Activated CD4-positive, alpha-beta T cell treated with anti-CD3 and anti-CD28 coated beads for 36 hours (primary cell): ENCODE measurements at regions of chr16 and their contacts with region 1.

Region 1: DNA sequence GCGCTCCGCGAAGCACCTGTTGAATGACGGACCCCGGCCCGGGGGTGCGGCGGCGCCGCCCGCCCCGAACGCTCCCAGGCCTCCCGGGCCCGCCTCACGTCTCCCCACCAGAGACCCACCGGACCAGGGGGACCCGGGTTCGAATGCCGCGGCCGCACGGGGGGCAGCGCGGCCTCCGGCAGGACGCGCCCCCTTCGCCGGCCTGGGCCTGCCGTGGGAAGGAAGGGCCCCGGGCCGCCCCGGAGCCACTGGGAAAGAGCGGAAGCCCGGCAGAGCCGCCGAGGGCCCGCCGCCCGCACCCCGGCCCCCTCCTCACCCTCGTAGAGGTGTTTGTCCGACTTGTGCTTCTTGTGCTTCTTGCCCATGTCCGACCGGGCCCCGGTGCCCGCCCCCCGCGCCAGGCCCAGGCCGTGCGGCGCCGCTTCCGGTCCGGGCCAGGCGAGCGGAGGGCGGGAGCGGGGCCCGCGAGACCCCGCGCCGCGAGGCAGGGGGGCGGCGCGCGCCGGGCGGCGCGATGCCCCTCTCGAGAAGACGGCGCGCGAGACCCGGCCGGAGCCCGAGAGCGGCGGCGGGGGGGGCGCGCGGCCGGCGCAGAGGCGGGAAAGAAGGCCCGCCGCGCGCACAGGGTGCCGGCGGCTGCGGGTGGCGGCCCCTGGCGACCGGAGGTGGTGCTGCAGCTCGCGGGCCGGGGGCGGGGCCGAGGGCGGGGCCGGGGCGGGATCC is at the start of gene BRD7:
- DNase-seq: peak; percentile 82
- ATAC-seq: peak; percentile 73
- H3K4me3 Mint-ChIP-seq: peak within 1 kb of the TSS; percentile 89
- H3K27ac Mint-ChIP-seq: peak within 1 kb of the TSS; percentile 86
- H3K4me1 Mint-ChIP-seq: peaks cover 41% of the 10 kb centered on the region
- H3K27me3 Mint-ChIP-seq: no peaks in the 10 kb centered on the region
- total RNA-seq, gene BRD7: 87.7 to 104 TPM

Region 2: GRCh38 chr16:50266337-50267091 is 102.1 kb before region 1 on chr16 and contains the start of gene ADCY7:
- CTCF ChIA-PET with region 1: interaction called, 3 read pairs
- POLR2A ChIA-PET with region 1: no interaction called
- intact Hi-C with region 1: loop called in 1 of 2 experiments (anchors 5 kb)
- DNase-seq: peak; percentile 92
- ATAC-seq: peak; percentile 83
- H3K4me3 Mint-ChIP-seq: peak within 1 kb of the TSS; percentile 87
- H3K27ac Mint-ChIP-seq: peak within 1 kb of the TSS; percentile 98
- H3K4me1 Mint-ChIP-seq: peaks cover 70% of the 10 kb centered on the region
- H3K27me3 Mint-ChIP-seq: no peaks in the 10 kb centered on the region
- total RNA-seq, gene ADCY7: 51.8 to 85.3 TPM

Region 3: GRCh38 chr16:50335196-50335958 is 33.2 kb before region 1 on chr16:
- CTCF ChIA-PET with region 1: interaction called, 4 read pairs
- POLR2A ChIA-PET with region 1: interaction called, 5 read pairs
- intact Hi-C with region 1: loop called in 1 of 2 experiments (anchors 2 kb)
- DNase-seq: peak; percentile 74
- ATAC-seq: peak; percentile 65
- H3K4me3 Mint-ChIP-seq: peak overlapping the region; percentile 41
- H3K27ac Mint-ChIP-seq: peak overlapping the region; percentile 94
- H3K4me1 Mint-ChIP-seq: peaks cover 73% of the 10 kb centered on the region
- H3K27me3 Mint-ChIP-seq: no peaks in the 10 kb centered on the region

Region 4: DNA sequence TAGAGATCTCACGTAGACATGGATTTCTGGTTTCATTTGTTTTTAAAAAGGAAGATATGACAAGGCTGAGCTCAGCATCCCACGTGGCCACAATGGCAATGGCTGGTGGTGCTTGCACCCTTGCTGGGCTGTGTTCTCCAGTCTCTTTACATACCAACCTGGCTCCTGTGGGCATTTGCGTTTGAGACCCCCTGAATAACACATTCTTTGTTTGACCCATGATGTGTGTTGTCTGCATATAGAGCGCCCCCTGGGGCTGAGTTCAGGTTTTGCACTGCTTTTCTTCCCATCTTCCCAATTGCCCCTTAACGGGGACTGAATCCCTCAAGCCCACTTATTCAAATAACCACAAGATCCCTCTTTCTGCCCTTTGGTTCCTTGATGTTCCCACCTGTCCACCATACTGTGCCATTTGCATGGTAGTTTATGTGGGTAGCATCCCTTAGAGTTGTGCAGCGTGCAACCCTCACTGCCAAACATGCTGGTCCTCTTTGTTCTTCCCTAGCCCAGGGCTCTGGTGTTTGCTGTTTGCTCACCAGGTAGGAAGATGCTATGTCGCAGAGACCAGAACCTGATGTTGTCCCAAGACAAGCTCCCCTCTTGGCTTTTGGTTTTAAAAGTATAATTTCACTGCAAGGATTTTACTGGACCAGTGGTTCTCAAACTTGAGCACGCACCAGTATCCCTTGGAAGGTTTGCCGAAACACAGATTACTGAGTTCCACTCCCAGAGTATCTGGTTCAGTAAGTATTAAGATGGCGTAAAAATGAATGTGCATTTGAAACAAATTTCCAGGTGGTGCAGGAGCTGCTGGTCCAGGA is 141.2 kb after region 1 on chr16:
- CTCF ChIA-PET with region 1: interaction called, 4 read pairs
- POLR2A ChIA-PET with region 1: no interaction called
- intact Hi-C with region 1: loop called (anchors 1 to 10 kb)
- DNase-seq: peak; percentile 65
- ATAC-seq: peak; percentile 36
- H3K4me3 Mint-ChIP-seq: no peak overlapping the region
- H3K27ac Mint-ChIP-seq: no peak overlapping the region
- H3K4me1 Mint-ChIP-seq: no peaks in the 10 kb centered on the region
- H3K27me3 Mint-ChIP-seq: no peaks in the 10 kb centered on the region

Region 5: GRCh38 chr16:50644729-50645128 is 276.2 kb after region 1 on chr16:
- CTCF ChIA-PET with region 1: interaction called, 3 read pairs
- POLR2A ChIA-PET with region 1: no interaction called
- intact Hi-C with region 1: loop called in 1 of 2 experiments (anchors 5 kb)
- DNase-seq: peak; percentile 69
- ATAC-seq: peak; percentile 79
- H3K4me3 Mint-ChIP-seq: no peak overlapping the region
- H3K27ac Mint-ChIP-seq: no peak overlapping the region
- H3K4me1 Mint-ChIP-seq: peaks cover 8% of the 10 kb centered on the region
- H3K27me3 Mint-ChIP-seq: no peaks in the 10 kb centered on the region

Region 6: GRCh38 chr16:50747207-50747956 is 378.8 kb after region 1 on chr16:
- CTCF ChIA-PET with region 1: interaction called, 5 read pairs
- POLR2A ChIA-PET with region 1: no interaction called
- intact Hi-C with region 1: loop called in 1 of 2 experiments (anchors 5 kb)
- DNase-seq: no peak
- ATAC-seq: peak; percentile 74
- H3K4me3 Mint-ChIP-seq: peak overlapping the region; percentile 68
- H3K27ac Mint-ChIP-seq: peak overlapping the region; percentile 88
- H3K4me1 Mint-ChIP-seq: peaks cover 66% of the 10 kb centered on the region
- H3K27me3 Mint-ChIP-seq: no peaks in the 10 kb centered on the region